ENCODE measurements at regions of chr16 and their contacts with region 1.

Region 1: GRCh38 chr16:78002915-78003538 is 19.3 kb upstream of the CLEC3A start:
- DNase-seq: peak; percentile 94
- ATAC-seq: peak; percentile 92
- H3K4me3 Mint-ChIP-seq: no peak overlapping the region
- H3K27ac Mint-ChIP-seq: no peak overlapping the region
- H3K4me1 Mint-ChIP-seq: peaks cover 29% of the 10 kb centered on the region
- H3K27me3 Mint-ChIP-seq: peaks cover 14% of the 10 kb centered on the region
- CTCF ChIP-seq: peak; percentile 89

Region 2: DNA sequence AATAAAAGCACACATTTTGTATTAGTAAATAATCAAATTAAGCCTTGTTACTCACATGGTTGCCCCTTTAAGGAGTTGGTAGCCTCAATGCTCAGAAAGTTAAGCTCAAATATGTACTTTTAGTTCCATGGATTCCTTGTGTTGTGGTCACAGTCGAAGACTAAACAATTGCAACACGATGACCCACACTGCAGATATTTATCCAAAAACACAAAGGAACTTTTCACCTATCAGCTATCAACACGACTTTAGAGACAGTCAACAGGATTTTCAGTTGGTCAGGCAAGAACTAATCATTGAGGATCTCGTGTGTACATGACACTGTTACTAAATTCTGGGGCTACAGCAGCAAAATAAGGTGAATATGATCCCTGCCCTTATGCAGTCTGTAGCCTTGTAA is 328.1 kb before region 1 on chr16:
- CTCF ChIA-PET with region 1: interaction called, 13 read pairs
- POLR2A ChIA-PET with region 1: no interaction called
- DNase-seq: no peak
- ATAC-seq: no peak
- H3K4me3 Mint-ChIP-seq: no peak overlapping the region
- H3K27ac Mint-ChIP-seq: no peak overlapping the region
- H3K4me1 Mint-ChIP-seq: no peaks in the 10 kb centered on the region; the same call in 1 of the 2 replicates
- H3K27me3 Mint-ChIP-seq: no peaks in the 10 kb centered on the region
- CTCF ChIP-seq: no peak

Region 3: GRCh38 chr16:77788181-77789084 is 214.6 kb before region 1 on chr16 and contains the start of gene VAT1L:
- CTCF ChIA-PET with region 1: interaction called, 13 read pairs
- POLR2A ChIA-PET with region 1: no interaction called
- DNase-seq: peak; percentile 59
- ATAC-seq: peak; percentile 83
- H3K4me3 Mint-ChIP-seq: peak within 1 kb of the TSS; percentile 95
- H3K27ac Mint-ChIP-seq: no peak within 1 kb of the TSS
- H3K4me1 Mint-ChIP-seq: peaks cover 20% of the 10 kb centered on the region
- H3K27me3 Mint-ChIP-seq: peaks cover 46% of the 10 kb centered on the region
- CTCF ChIP-seq: no peak
- total RNA-seq, gene VAT1L: 19.1 to 22.2 TPM (median 22.0 TPM) in 3 replicates

Region 4: GRCh38 chr16:77963185-77964044 is 39.6 kb before region 1 on chr16:
- CTCF ChIA-PET with region 1: interaction called, 68 read pairs
- POLR2A ChIA-PET with region 1: interaction called, 3 read pairs
- DNase-seq: peak; percentile 36
- ATAC-seq: peak; percentile 50
- H3K4me3 Mint-ChIP-seq: peak overlapping the region; percentile 20
- H3K27ac Mint-ChIP-seq: peak overlapping the region; percentile 77
- H3K4me1 Mint-ChIP-seq: peaks cover 67% of the 10 kb centered on the region
- H3K27me3 Mint-ChIP-seq: peaks cover 66% of the 10 kb centered on the region
- CTCF ChIP-seq: no peak

Region 5: DNA sequence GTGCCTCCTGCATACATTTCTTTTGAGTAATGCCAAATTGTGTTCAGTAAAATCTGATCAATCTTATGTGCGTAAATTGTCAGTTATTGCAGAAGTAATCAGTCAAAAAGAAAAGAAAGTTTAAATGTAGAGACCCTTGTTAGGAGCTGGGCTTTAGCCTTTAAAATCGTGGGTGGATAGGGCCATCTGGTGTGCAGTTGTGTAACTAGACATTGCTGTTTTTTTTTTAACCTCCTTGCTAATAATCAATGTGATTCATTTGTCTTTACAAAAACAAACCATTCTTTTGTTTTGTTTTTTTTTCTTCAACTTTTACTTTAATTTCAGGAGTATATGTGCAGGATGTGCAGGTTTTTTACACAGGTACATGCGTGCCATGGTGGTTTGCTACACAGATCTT is 91.1 kb after region 1 on chr16:
- CTCF ChIA-PET with region 1: interaction called, 10 read pairs
- POLR2A ChIA-PET with region 1: no interaction called
- DNase-seq: no peak
- ATAC-seq: no peak
- H3K4me3 Mint-ChIP-seq: no peak overlapping the region
- H3K27ac Mint-ChIP-seq: no peak overlapping the region
- H3K4me1 Mint-ChIP-seq: peaks cover 4% of the 10 kb centered on the region
- H3K27me3 Mint-ChIP-seq: peaks cover 68% of the 10 kb centered on the region
- CTCF ChIP-seq: no peak

Measured in WTC11 (cell line).